ENCODE measurements at regions of chr18 and their contacts with region 1.

Region 1: DNA sequence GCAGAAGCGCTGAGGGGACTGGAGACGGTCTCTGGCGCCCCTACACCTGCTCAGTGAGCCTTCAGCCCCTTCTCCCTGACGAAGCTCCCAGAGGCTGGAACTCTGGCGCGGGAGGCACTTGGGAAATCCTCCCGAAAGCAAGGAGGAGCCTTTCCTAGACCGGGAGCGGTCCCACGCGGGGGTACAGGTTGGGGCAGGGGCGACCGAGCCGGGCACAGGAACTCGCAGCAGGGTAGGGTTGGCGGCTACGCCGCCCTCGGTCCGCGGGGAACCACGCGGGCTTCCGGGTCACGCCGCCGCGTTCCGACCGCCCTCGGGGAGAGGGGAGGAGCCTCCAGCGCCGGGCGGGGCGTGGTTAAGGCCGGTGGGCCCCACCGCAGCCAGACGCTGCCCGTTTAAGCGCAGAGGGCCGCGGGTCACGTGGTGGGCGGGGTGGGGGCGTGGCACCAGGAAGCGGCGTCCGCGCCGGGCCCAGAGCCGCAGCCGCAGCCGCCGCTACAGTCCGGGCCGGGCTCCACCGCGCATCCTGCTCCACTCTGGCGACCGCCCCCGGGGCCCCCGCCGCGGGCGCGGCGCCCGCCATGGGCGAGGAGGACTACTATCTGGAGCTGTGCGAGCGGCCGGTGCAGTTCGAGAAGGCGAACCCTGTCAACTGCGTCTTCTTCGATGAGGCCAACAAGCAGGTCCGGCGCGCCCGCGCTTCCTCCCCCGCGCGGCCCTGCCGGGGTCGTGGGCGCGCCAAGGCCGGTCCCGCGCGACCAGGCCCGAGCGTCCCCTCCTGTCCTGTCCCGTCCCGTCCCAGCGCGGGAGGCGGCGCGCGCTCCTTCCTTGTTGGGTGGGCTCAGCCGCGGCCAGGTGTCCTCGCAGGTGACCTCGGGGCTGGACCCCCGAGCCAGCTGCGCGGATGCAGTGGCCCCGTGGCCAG is at the start of gene RMC1:
- DNase-seq: peak; percentile 94 to 96 (median 95)
- H3K4me3 ChIP-seq: peak within 1 kb of the TSS; percentile 84 to 85
- H3K4me3 Mint-ChIP-seq: peak within 1 kb of the TSS; percentile 89 to 97 (median 94)
- H3K27ac ChIP-seq: peak within 1 kb of the TSS; percentile 82
- H3K27ac Mint-ChIP-seq: peak within 1 kb of the TSS; percentile 91 to 98 (median 96)
- H3K4me1 ChIP-seq: peaks cover 48% of the 10 kb centered on the region
- H3K4me1 Mint-ChIP-seq: peaks cover 32 to 71% (median 50%) of the 10 kb centered on the region in 4 donors
- H3K27me3 ChIP-seq: no peaks in the 10 kb centered on the region
- H3K27me3 Mint-ChIP-seq: no peaks in the 10 kb centered on the region
- total RNA-seq, gene RMC1: 56.6 TPM

Region 2: DNA sequence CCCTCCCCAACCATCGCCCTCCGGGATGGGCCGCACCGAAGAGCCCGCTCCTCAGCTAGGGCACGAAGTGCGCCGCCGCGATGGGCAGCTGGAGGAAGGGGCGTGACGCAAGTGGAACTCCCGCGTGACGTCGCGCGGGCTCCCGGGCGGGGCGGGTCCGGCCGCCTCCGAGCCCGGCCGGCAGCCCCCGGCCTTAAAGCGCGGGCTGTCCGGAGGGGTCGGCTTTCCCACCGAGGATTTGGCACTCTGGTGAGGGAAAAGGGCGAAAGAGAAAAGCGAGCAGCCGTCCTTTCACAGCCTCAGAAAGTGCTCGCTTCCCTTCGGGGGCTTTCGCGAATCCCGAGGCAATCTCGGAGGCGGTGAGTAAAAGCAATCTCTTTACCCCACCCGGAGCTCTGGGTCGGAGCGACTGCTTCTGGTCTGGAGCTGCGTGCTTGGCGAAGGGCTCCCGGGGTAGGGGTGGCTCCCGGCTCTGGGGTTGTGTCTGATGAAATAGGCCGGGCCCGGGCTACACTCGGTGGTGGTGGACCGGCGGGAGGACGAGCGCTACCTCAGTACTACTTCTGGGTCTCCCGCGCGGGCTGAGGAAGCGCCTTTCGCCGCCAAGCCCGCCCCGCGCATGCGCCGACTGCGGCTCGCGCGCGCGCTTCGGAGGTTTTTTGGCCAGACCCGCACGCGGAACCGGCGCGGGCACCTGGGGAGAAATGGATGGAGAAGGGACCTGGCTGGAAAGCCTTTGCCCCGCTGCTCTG is 569.9 kb before region 1 on chr18 and contains the start of gene RBBP8:
- CTCF ChIA-PET with region 1: no interaction called
- POLR2A ChIA-PET with region 1: no interaction called
- intact Hi-C with region 1: loop called (anchors 5 kb)
- DNase-seq: peak; percentile 70 to 90 (median 86)
- H3K4me3 ChIP-seq: peak within 1 kb of the TSS; percentile 59 to 90
- H3K4me3 Mint-ChIP-seq: peak within 1 kb of the TSS; percentile 85 to 94 (median 88)
- H3K27ac ChIP-seq: peak within 1 kb of the TSS; percentile 82
- H3K27ac Mint-ChIP-seq: peak within 1 kb of the TSS; percentile 79 to 98 (median 93)
- H3K4me1 ChIP-seq: peaks cover 7% of the 10 kb centered on the region
- H3K4me1 Mint-ChIP-seq: peaks cover 10 to 16% (median 12%) of the 10 kb centered on the region in 4 donors
- H3K27me3 ChIP-seq: no peaks in the 10 kb centered on the region
- H3K27me3 Mint-ChIP-seq: no peaks in the 10 kb centered on the region
- total RNA-seq, gene RBBP8: 1.4 to 3.0 TPM

Region 3: DNA sequence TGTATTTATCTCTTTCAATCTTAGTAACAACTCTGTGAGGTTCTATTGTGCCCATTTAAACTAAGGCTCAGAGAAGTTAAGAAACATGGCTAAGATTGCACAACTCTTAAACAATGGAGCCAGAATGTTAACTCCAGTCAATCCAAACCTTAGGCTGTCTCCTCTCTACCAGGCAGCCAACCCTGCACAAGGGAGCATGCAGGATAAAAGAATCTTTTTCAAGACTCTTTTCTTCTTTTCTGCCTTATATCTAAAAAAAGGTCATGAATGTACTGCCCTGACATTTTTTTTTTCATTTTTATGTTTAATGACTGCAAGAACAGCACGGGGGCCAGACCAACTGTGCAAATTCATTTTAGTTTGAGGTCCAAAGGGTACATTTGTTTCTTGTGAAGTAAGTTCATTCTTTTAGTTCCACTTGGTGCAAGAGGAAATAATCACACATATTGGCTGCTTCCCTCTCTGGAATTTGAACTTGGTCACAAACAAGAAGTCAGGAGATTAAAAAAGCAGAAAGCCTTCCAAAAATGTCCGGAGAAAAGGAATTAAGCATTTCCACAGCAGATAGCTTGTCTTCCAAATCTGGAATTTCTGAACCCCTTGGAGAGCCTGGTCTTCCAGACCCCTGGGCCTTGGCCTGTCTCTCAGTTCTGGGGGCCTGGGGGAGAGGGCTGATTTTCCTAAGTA is 146.2 kb before region 1 on chr18:
- CTCF ChIA-PET with region 1: no interaction called
- POLR2A ChIA-PET with region 1: no interaction called
- intact Hi-C with region 1: no loop called
- DNase-seq: no peak
- H3K4me3 ChIP-seq: no peak overlapping the region
- H3K4me3 Mint-ChIP-seq: no peak overlapping the region
- H3K27ac ChIP-seq: no peak overlapping the region
- H3K27ac Mint-ChIP-seq: no peak overlapping the region
- H3K4me1 ChIP-seq: peaks cover 12% of the 10 kb centered on the region
- H3K4me1 Mint-ChIP-seq: peaks cover 4 to 15% (median 10%) of the 10 kb centered on the region in 4 donors
- H3K27me3 ChIP-seq: no peaks in the 10 kb centered on the region
- H3K27me3 Mint-ChIP-seq: no peaks in the 10 kb centered on the region

Region 4: GRCh38 chr18:23452728-23453679 is 50.3 kb before region 1 on chr18 and contains the start of gene RIOK3:
- CTCF ChIA-PET with region 1: interaction called, 4 read pairs
- POLR2A ChIA-PET with region 1: interaction called, 10 read pairs
- intact Hi-C with region 1: loop called (anchors 2 kb)
- DNase-seq: peak; percentile 79 to 91 (median 82)
- H3K4me3 ChIP-seq: peak within 1 kb of the TSS; percentile 95
- H3K4me3 Mint-ChIP-seq: peak within 1 kb of the TSS; percentile 94 to 100 (median 100)
- H3K27ac ChIP-seq: peak within 1 kb of the TSS; percentile 92
- H3K27ac Mint-ChIP-seq: peak within 1 kb of the TSS; percentile 89 to 98 (median 94)
- H3K4me1 ChIP-seq: peaks cover 41% of the 10 kb centered on the region
- H3K4me1 Mint-ChIP-seq: peaks cover 21 to 54% (median 35%) of the 10 kb centered on the region in 4 donors
- H3K27me3 ChIP-seq: no peaks in the 10 kb centered on the region
- H3K27me3 Mint-ChIP-seq: peaks cover 0 to 1% of the 10 kb centered on the region in 2 donors
- total RNA-seq, gene RIOK3: 73.2 to 84.4 TPM

Region 5: DNA sequence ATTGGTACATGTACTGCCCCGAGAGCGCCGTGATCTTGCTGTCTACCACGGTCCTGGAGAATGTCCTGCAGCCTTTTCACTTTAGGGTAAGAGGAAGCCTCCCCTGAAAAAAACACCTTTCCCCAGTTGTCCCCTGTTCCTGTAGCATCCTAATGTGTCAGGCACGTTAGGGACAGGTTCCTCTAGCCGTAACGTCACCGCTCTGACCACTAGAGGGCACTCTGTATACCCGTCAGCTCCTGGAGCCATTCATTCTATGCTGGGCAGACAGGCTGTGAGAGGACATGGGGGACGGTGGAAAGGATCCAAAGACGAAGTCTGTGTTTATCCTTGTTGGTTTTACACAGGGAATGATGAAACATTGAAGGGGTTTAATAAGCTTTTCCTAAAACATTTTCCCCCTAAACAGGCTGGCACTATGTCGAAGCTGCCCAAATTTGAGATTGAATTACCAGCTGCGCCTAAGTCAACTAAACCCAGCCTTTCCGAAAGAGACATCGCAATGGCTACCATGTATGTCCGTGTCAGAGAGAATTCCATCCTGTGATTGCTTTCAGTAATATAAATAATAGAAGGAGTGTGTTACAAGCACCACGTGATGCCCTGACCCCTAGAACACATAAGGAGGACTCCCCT is 12.7 kb after region 1 on chr18:
- CTCF ChIA-PET with region 1: interaction called, 27 read pairs
- POLR2A ChIA-PET with region 1: interaction called, 12 read pairs
- intact Hi-C with region 1: loop called (anchors 1 kb)
- DNase-seq: peak; percentile 71 to 75 (median 75)
- H3K4me3 ChIP-seq: no peak overlapping the region
- H3K4me3 Mint-ChIP-seq: no peak overlapping the region
- H3K27ac ChIP-seq: no peak overlapping the region
- H3K27ac Mint-ChIP-seq: peak overlapping the region; percentile 39 to 91 (median 82)
- H3K4me1 ChIP-seq: peaks cover 13% of the 10 kb centered on the region
- H3K4me1 Mint-ChIP-seq: peaks cover 9 to 30% (median 20%) of the 10 kb centered on the region in 4 donors
- H3K27me3 ChIP-seq: no peaks in the 10 kb centered on the region
- H3K27me3 Mint-ChIP-seq: no peaks in the 10 kb centered on the region

Region 6: DNA sequence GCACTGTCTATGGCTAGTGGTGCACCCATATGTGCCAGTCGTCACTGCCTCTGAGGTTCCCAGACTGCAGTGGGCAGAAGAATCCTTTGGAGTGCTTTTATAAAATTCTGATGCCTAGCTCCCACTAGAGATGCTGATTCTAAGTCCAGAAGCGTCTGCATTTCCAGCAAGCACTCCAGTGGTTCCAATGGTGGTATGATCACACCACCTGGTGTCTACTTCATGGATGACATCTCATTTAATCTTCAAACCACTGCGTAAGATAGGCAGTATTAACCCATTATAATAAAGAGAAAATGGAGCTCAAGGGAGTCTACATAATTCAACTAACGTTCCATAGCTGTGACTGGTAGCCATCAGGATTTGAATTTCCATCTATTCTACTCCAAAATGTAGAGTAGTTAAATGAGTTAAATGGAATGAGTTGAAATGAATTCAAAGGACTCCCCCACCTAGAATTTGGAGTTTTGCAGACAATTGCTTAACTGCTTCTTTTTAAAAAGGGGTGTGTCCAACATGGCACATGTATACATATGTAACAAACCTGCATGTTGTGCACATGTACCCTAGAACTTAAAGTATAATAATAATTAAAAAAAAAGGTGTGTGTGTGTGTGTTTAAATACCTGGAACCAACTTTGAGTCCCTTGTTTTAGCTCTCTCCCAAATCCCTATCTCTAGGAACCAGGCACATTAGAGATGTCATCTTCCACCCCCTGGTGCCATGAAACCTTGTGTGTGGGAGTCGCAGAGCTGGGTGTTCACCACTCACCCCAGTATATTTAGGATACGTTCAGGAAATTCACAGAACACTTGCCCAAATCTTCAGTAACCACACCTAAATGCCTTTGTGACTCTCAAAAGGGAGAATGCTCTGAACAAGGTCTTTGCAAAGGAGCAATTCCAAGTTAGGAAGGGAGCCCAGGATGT is 200.0 kb after region 1 on chr18:
- CTCF ChIA-PET with region 1: interaction called, 30 read pairs
- POLR2A ChIA-PET with region 1: no interaction called
- intact Hi-C with region 1: no loop called
- DNase-seq: peak; percentile 39 to 50 (median 48)
- H3K4me3 ChIP-seq: no peak overlapping the region
- H3K4me3 Mint-ChIP-seq: no peak overlapping the region
- H3K27ac ChIP-seq: no peak overlapping the region
- H3K27ac Mint-ChIP-seq: no peak overlapping the region
- H3K4me1 ChIP-seq: no peaks in the 10 kb centered on the region
- H3K4me1 Mint-ChIP-seq: no peaks in the 10 kb centered on the region
- H3K27me3 ChIP-seq: no peaks in the 10 kb centered on the region
- H3K27me3 Mint-ChIP-seq: peaks cover 14 to 31% of the 10 kb centered on the region in 2 donors

Region 7: GRCh38 chr18:23716516-23716915 is 213.2 kb after region 1 on chr18:
- CTCF ChIA-PET with region 1: no interaction called
- POLR2A ChIA-PET with region 1: no interaction called
- intact Hi-C with region 1: no loop called
- DNase-seq: no peak
- H3K4me3 ChIP-seq: no peak overlapping the region
- H3K4me3 Mint-ChIP-seq: no peak overlapping the region
- H3K27ac ChIP-seq: no peak overlapping the region
- H3K27ac Mint-ChIP-seq: no peak overlapping the region
- H3K4me1 ChIP-seq: peaks cover 14% of the 10 kb centered on the region
- H3K4me1 Mint-ChIP-seq: peaks cover 13 to 17% (median 15%) of the 10 kb centered on the region in 4 donors
- H3K27me3 ChIP-seq: no peaks in the 10 kb centered on the region
- H3K27me3 Mint-ChIP-seq: peaks cover 3% of the 10 kb centered on the region in 2 donors

Region 8: GRCh38 chr18:24014062-24014985 is 511.0 kb after region 1 on chr18 and contains the start of gene TTC39C:
- CTCF ChIA-PET with region 1: no interaction called
- POLR2A ChIA-PET with region 1: no interaction called
- intact Hi-C with region 1: loop called (anchors 2 kb)
- DNase-seq: peak; percentile 78 to 88 (median 82)
- H3K4me3 ChIP-seq: peak within 1 kb of the TSS; percentile 73 to 83
- H3K4me3 Mint-ChIP-seq: peak within 1 kb of the TSS; percentile 92 to 100 (median 96)
- H3K27ac ChIP-seq: peak within 1 kb of the TSS; percentile 75
- H3K27ac Mint-ChIP-seq: peak within 1 kb of the TSS; percentile 90 to 98 (median 94)
- H3K4me1 ChIP-seq: peaks cover 77% of the 10 kb centered on the region
- H3K4me1 Mint-ChIP-seq: peaks cover 53 to 87% (median 64%) of the 10 kb centered on the region in 4 donors
- H3K27me3 ChIP-seq: no peaks in the 10 kb centered on the region
- H3K27me3 Mint-ChIP-seq: no peaks in the 10 kb centered on the region
- total RNA-seq, gene TTC39C: 168 to 180 TPM